Esophagus squamous epithelium (tissue), 5 donors: ENCODE measurements at regions of chr17 and their contacts with region 1.

Region 1: GRCh38 chr17:78360371-78361224 is 721 bp upstream of the SOCS3 start:
- DNase-seq: peak; percentile 46
- H3K4me3 ChIP-seq: peak overlapping the region; percentile 47 to 98 (median 74)
- H3K27ac ChIP-seq: peak overlapping the region; percentile 81 to 96 (median 94)
- H3K4me1 ChIP-seq: peaks cover 34 to 61% (median 49%) of the 10 kb centered on the region in 3 donors
- H3K27me3 ChIP-seq: peaks cover 0 to 56% (median 0%) of the 10 kb centered on the region in 4 donors
- CTCF ChIP-seq: peak; percentile 87 to 98 (median 96)
- POLR2A ChIP-seq: no peak

Region 2: DNA sequence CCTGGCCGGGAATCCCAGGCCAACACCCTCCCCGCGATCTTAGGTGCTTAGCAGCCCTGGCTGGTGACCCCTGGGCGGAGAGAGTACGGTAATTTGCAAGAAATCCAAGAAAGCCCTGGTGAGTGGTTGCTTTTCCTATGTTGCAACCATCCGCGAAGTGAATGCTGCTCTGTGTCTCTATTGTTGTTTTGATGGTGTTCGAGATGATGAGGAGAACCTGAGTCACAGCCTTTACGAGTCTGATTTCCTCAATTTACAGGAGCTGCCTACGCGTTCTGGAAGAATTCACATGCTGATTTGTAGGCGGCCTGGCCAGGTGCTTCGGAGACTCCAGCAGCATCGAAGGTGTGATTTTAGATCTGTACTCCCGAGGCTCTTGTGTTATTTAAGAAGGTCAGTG is 65.8 kb before region 1 on chr17:
- intact Hi-C with region 1: no loop called
- DNase-seq: no peak
- H3K4me3 ChIP-seq: no peak overlapping the region
- H3K27ac ChIP-seq: peak overlapping the region in 1 of 4 donors; percentile 34
- H3K4me1 ChIP-seq: peaks cover 0 to 13% (median 2%) of the 10 kb centered on the region in 3 donors
- H3K27me3 ChIP-seq: no peaks in the 10 kb centered on the region
- CTCF ChIP-seq: no peak
- POLR2A ChIP-seq: no peak

Region 3: GRCh38 chr17:78416791-78417530 is 56.4 kb after region 1 on chr17:
- intact Hi-C with region 1: loop called (anchors 5 kb)
- DNase-seq: no peak
- H3K4me3 ChIP-seq: peak overlapping the region in 1 of 4 donors; percentile 22
- H3K27ac ChIP-seq: peak overlapping the region; percentile 59 to 94 (median 80)
- H3K4me1 ChIP-seq: peaks cover 10 to 85% (median 50%) of the 10 kb centered on the region in 3 donors
- H3K27me3 ChIP-seq: no peaks in the 10 kb centered on the region
- CTCF ChIP-seq: no peak
- POLR2A ChIP-seq: peak in 1 of 4 donors; percentile 37